PC-3 (cell line): ENCODE measurements at regions of chr6 and their contacts with region 1.

Region 1: GRCh38 chr6:29737707-29738630 is 14.7 kb downstream of the HLA-F start:
- DNase-seq: peak; percentile 82
- ATAC-seq: peak; percentile 95
- H3K4me3 ChIP-seq: no peak overlapping the region
- H3K27ac ChIP-seq: no peak overlapping the region
- H3K4me1 ChIP-seq: no peaks in the 10 kb centered on the region
- H3K27me3 ChIP-seq: no peaks in the 10 kb centered on the region
- CTCF ChIP-seq: peak; percentile 90

Region 2: GRCh38 chr6:29834564-29835436 is 96.8 kb after region 1 on chr6:
- CTCF ChIA-PET with region 1: interaction called, 4 read pairs
- POLR2A ChIA-PET with region 1: no interaction called
- intact Hi-C with region 1: loop called (anchors 1 kb)
- DNase-seq: peak; percentile 62
- ATAC-seq: peak; percentile 70
- H3K4me3 ChIP-seq: no peak overlapping the region
- H3K27ac ChIP-seq: no peak overlapping the region
- H3K4me1 ChIP-seq: no peaks in the 10 kb centered on the region
- H3K27me3 ChIP-seq: peaks cover 5% of the 10 kb centered on the region
- CTCF ChIP-seq: peak; percentile 90